ENCODE measurements at regions of chr13 and their contacts with region 1.

Region 1: DNA sequence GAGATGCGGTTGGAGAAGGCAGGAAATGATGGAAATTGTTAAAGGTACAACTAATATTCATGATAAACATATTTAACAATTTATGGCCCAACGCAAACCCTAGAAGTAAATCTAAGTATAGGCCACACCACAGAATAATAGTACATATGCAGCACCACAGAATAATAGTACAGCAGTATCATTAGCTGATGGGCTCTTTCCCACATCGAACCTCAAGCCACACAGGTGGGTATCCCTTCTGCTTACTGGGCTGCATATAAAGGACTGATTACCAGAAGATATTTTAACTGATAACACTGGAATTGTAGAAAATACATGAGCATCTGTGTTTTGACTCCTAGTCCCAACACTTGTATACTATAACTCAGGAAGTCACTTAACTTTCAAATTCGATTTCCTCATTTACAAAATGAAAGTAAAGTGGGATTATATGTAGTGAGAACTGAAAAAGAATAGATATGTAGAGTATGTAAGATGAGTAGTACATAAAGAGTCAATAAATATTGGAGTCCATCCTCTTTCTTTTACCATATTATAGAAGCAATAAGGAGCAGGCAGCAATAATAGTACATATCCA is 91.5 kb downstream of the TSC22D1 start:
- DNase-seq: no peak
- H3K4me3 ChIP-seq: peak overlapping the region in 3 of 8 donors; percentile 16 to 55 (median 16)
- H3K27ac ChIP-seq: peak overlapping the region in 7 of 8 donors; percentile 5 to 61 (median 27)
- H3K4me1 ChIP-seq: peaks cover 9 to 26% (median 18%) of the 10 kb centered on the region in 6 donors
- H3K27me3 ChIP-seq: no peaks in the 10 kb centered on the region
- CTCF ChIP-seq: no peak
- POLR2A ChIP-seq: no peak

Region 2: GRCh38 chr13:43878892-43879754 is 605.5 kb before region 1 on chr13 and contains the start of gene CCDC122:
- intact Hi-C with region 1: no loop called
- DNase-seq: peak; percentile 97
- H3K4me3 ChIP-seq: peak within 1 kb of the TSS; percentile 56 to 83 (median 68)
- H3K27ac ChIP-seq: peak within 1 kb of the TSS; percentile 92 to 98 (median 97)
- H3K4me1 ChIP-seq: peaks cover 14 to 46% (median 31%) of the 10 kb centered on the region in 6 donors
- H3K27me3 ChIP-seq: no peaks in the 10 kb centered on the region
- CTCF ChIP-seq: peak in 3 of 11 experiments; percentile 10 to 15 (median 11)
- POLR2A ChIP-seq: peak in 2 of 3 donors; percentile 67 to 75
- total RNA-seq, gene CCDC122: 3.6 to 10.9 (median 7.3) TPM

Region 3: GRCh38 chr13:44577236-44578066 is 92.8 kb after region 1 on chr13:
- intact Hi-C with region 1: loop called (anchors 10 kb)
- DNase-seq: peak; percentile 99
- H3K4me3 ChIP-seq: peak overlapping the region; percentile 67 to 89 (median 86)
- H3K27ac ChIP-seq: peak overlapping the region; percentile 89 to 98 (median 96)
- H3K4me1 ChIP-seq: peaks cover 11 to 53% (median 33%) of the 10 kb centered on the region in 6 donors
- H3K27me3 ChIP-seq: no peaks in the 10 kb centered on the region
- CTCF ChIP-seq: no peak
- POLR2A ChIP-seq: peak in 1 of 3 donors; percentile 69

Region 4: GRCh38 chr13:44969551-44970484 is 485.2 kb after region 1 on chr13:
- intact Hi-C with region 1: loop called (anchors 5 kb)
- DNase-seq: no peak
- H3K4me3 ChIP-seq: no peak overlapping the region
- H3K27ac ChIP-seq: peak overlapping the region in 6 of 8 donors; percentile 16 to 72 (median 36)
- H3K4me1 ChIP-seq: peaks cover 3 to 50% (median 30%) of the 10 kb centered on the region in 6 donors
- H3K27me3 ChIP-seq: no peaks in the 10 kb centered on the region
- CTCF ChIP-seq: peak in 10 of 11 experiments; percentile 56 to 78 (median 66)
- POLR2A ChIP-seq: no peak

Region 5: DNA sequence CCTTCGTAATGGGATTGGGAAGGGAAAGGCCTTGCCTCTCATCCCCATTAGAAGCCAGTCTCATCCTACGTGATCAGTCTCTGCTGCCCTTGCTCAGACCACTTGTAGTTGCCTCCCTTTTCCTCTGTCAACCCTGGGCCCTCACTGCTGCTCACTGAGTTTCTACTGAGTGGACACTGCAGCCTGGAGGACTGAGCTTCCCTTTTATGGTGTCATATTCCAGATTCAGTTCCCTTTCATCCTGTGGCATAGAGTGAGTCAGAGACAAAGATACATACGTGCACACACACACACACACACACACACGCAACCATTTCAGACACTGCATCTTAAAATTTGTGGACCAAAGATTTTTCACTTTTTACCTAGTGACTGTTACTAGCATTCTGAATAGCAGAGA is 1036.6 kb after region 1 on chr13:
- intact Hi-C with region 1: no loop called
- DNase-seq: no peak
- H3K4me3 ChIP-seq: no peak overlapping the region
- H3K27ac ChIP-seq: peak overlapping the region in 3 of 8 donors; percentile 26 to 49 (median 33)
- H3K4me1 ChIP-seq: no peaks in the 10 kb centered on the region
- H3K27me3 ChIP-seq: no peaks in the 10 kb centered on the region
- CTCF ChIP-seq: no peak
- POLR2A ChIP-seq: no peak

Measured in spleen (tissue), 13 donors.